ENCODE measurements at regions of chr13 and their contacts with region 1.

Region 1: GRCh38 chr13:23752111-23753001 is 136.8 kb downstream of the MIPEP start:
- DNase-seq: no peak
- H3K4me3 Mint-ChIP-seq: no peak overlapping the region
- H3K27ac Mint-ChIP-seq: no peak overlapping the region
- H3K4me1 Mint-ChIP-seq: peaks cover 29% of the 10 kb centered on the region
- H3K27me3 Mint-ChIP-seq: peaks cover 4% of the 10 kb centered on the region

Region 2: GRCh38 chr13:23741879-23742510 is 10.4 kb before region 1 on chr13:
- intact Hi-C with region 1: loop called (anchors 1 kb)
- DNase-seq: no peak
- H3K4me3 Mint-ChIP-seq: no peak overlapping the region
- H3K27ac Mint-ChIP-seq: no peak overlapping the region
- H3K4me1 Mint-ChIP-seq: peaks cover 27% of the 10 kb centered on the region
- H3K27me3 Mint-ChIP-seq: peaks cover 10% of the 10 kb centered on the region

Region 3: GRCh38 chr13:23794267-23795161 is 42.2 kb after region 1 on chr13:
- intact Hi-C with region 1: loop called (anchors 1 kb)
- DNase-seq: no peak
- H3K4me3 Mint-ChIP-seq: no peak overlapping the region
- H3K27ac Mint-ChIP-seq: no peak overlapping the region
- H3K4me1 Mint-ChIP-seq: peaks cover under 1% of the 10 kb centered on the region
- H3K27me3 Mint-ChIP-seq: no peaks in the 10 kb centered on the region

Region 4: DNA sequence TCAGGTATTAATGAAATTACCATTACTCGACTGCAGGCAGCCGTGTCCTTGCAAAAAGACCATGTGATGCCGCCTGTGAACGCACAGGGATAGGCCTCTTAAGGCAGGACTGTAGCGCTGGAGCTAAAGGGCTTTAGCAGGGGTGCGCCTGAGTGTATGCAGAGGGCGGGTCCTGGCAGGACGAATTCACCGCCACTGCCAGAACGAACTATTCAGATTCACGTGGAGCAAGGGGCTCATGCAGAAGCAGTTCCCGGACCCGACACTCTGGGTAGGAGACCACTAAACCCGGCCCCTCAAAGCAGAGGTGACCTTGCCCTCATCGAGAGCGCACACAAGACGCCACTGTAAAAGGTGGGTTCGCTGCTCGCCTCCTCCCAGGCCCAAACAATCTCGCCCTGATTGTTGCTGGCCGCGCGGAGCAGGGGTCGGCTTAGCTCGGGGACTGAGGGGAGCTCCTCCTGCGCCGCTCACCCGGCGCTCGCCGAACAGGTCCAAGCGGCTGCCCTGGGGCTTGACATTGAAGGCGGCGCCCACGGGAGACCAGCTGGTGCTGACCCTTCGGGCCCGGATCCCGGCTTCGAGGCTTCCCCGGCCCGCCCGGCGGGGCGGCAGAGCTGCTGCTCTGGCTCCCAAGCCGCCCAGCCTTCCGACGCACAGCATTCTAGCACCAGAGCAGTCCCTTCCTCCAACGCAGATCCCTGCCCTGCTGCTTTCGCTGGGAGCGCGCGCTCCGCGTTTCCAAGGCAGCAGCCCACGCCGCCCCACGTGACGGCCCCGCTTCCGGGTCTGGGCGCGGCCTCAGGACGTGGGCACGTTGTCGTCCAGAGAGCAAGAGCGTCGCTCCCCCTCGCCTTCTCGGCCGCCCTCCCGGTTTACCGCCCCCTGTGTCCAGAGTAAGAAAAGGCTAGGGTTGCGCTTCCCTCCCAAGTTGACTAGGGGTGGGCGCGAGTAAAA is 136.6 kb after region 1 on chr13 and contains the start of gene MIPEP:
- intact Hi-C with region 1: loop called (anchors 2 kb)
- DNase-seq: peak; percentile 86
- H3K4me3 Mint-ChIP-seq: peak within 1 kb of the TSS; percentile 89
- H3K27ac Mint-ChIP-seq: peak within 1 kb of the TSS; percentile 90
- H3K4me1 Mint-ChIP-seq: peaks cover 31% of the 10 kb centered on the region
- H3K27me3 Mint-ChIP-seq: no peaks in the 10 kb centered on the region
- total RNA-seq, gene MIPEP: 7.3 and 7.8 TPM in 2 replicates

Region 5: GRCh38 chr13:23980160-23980551 is 227.8 kb after region 1 on chr13:
- intact Hi-C with region 1: loop called (anchors 5 kb)
- DNase-seq: peak; percentile 89
- H3K4me3 Mint-ChIP-seq: peak overlapping the region; percentile 90
- H3K27ac Mint-ChIP-seq: peak overlapping the region; percentile 79
- H3K4me1 Mint-ChIP-seq: peaks cover 18% of the 10 kb centered on the region
- H3K27me3 Mint-ChIP-seq: peaks cover 53% of the 10 kb centered on the region

Region 6: GRCh38 chr13:24187185-24187584 is 434.8 kb after region 1 on chr13:
- intact Hi-C with region 1: loop called (anchors 5 kb)
- DNase-seq: peak; percentile 3
- H3K4me3 Mint-ChIP-seq: peak overlapping the region; percentile 42
- H3K27ac Mint-ChIP-seq: peak overlapping the region; percentile 86
- H3K4me1 Mint-ChIP-seq: peaks cover 63% of the 10 kb centered on the region
- H3K27me3 Mint-ChIP-seq: no peaks in the 10 kb centered on the region